CD14-positive monocyte (primary cell): ENCODE measurements at regions of chr19 and their contacts with region 1.

Region 1: GRCh38 chr19:45584332-45585157 is at the start of gene OPA3:
- DNase-seq: peak; percentile 99 to 100 (median 100)
- H3K4me3 ChIP-seq: peak within 1 kb of the TSS; percentile 87 to 92 (median 89)
- H3K4me3 Mint-ChIP-seq: peak within 1 kb of the TSS; percentile 93 to 94
- H3K27ac ChIP-seq: peak within 1 kb of the TSS; percentile 95 to 98
- H3K27ac Mint-ChIP-seq: peak within 1 kb of the TSS; percentile 97 to 99 (median 98)
- H3K4me1 ChIP-seq: peaks cover 12 to 16% of the 10 kb centered on the region in 2 donors
- H3K4me1 Mint-ChIP-seq: peaks cover 8% of the 10 kb centered on the region
- H3K27me3 ChIP-seq: no peaks in the 10 kb centered on the region
- H3K27me3 Mint-ChIP-seq: peaks cover 2 to 12% (median 10%) of the 10 kb centered on the region in 3 donors
- CTCF ChIP-seq: no peak
- polyA plus RNA-seq, gene OPA3: 4.4 to 6.9 (median 5.6) TPM

Region 2: DNA sequence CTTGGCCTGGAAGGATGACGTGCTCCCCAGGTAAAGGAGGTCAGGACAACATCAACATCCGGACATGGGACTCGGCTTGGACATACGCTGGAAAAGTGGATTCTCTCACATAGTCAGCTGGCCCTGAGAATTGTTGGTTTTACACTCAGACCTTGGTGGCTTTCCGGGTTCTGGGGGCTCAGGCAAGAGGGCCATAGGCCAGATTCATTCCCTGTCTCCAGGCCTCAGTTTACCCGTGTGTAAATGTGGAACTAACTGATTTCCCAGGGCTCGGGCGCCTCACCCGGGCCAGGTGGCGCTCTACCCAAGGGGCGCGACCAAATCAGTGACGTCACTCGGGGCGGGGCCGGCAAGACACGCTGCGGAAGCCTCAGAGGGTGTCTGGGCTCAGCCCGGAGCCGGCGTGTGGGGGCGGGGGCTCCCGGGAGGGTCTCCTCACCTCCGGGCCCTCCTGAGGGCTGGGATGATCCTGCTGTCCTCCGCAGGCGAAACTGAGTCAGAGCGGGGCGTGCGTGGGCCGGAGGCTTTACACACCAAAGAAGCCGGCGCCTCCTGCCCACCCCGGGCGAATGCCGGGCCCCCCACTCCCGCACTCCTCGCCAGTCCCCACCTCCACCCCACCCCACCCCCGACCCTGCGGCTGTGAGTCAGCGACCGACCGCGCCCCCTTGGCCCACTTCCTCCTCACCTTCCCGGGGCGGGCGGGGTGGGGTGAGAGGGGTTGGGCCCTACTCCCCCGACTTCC is 78.1 kb before region 1 on chr19:
- intact Hi-C with region 1: loop called in 1 of 2 experiments (anchors 5 kb)
- DNase-seq: peak; percentile 89 to 95 (median 89)
- H3K4me3 ChIP-seq: peak overlapping the region; percentile 80 to 100 (median 91)
- H3K4me3 Mint-ChIP-seq: peak overlapping the region; percentile 88 to 89
- H3K27ac ChIP-seq: peak overlapping the region; percentile 96 to 99
- H3K27ac Mint-ChIP-seq: peak overlapping the region; percentile 96 to 99 (median 97)
- H3K4me1 ChIP-seq: peaks cover 59 to 76% of the 10 kb centered on the region in 2 donors
- H3K4me1 Mint-ChIP-seq: peaks cover 61% of the 10 kb centered on the region
- H3K27me3 ChIP-seq: no peaks in the 10 kb centered on the region
- H3K27me3 Mint-ChIP-seq: peaks cover 0 to 4% (median 0%) of the 10 kb centered on the region in 3 donors
- CTCF ChIP-seq: peak; percentile 34

Region 3: GRCh38 chr19:45730389-45731288 is 146.1 kb after region 1 on chr19 and contains the start of gene FBXO46:
- intact Hi-C with region 1: no loop called
- DNase-seq: peak; percentile 95 to 96 (median 95)
- H3K4me3 ChIP-seq: peak within 1 kb of the TSS; percentile 70 to 90 (median 72)
- H3K4me3 Mint-ChIP-seq: peak within 1 kb of the TSS; percentile 84 to 97
- H3K27ac ChIP-seq: peak within 1 kb of the TSS; percentile 11 to 90
- H3K27ac Mint-ChIP-seq: peak within 1 kb of the TSS; percentile 87 to 97 (median 93)
- H3K4me1 ChIP-seq: peaks cover 14 to 19% of the 10 kb centered on the region in 2 donors
- H3K4me1 Mint-ChIP-seq: peaks cover 22% of the 10 kb centered on the region
- H3K27me3 ChIP-seq: no peaks in the 10 kb centered on the region
- H3K27me3 Mint-ChIP-seq: peaks cover 0 to under 1% (median 0%) of the 10 kb centered on the region in 3 donors
- CTCF ChIP-seq: no peak
- polyA plus RNA-seq, gene FBXO46: 3.8 to 6.8 (median 5.5) TPM